Activated naive CD4-positive, alpha-beta T cell treated with anti-CD3 and anti-CD28 coated beads for 36 hours (primary cell): ENCODE measurements at regions of chr2 and their contacts with region 1.

Region 1: DNA sequence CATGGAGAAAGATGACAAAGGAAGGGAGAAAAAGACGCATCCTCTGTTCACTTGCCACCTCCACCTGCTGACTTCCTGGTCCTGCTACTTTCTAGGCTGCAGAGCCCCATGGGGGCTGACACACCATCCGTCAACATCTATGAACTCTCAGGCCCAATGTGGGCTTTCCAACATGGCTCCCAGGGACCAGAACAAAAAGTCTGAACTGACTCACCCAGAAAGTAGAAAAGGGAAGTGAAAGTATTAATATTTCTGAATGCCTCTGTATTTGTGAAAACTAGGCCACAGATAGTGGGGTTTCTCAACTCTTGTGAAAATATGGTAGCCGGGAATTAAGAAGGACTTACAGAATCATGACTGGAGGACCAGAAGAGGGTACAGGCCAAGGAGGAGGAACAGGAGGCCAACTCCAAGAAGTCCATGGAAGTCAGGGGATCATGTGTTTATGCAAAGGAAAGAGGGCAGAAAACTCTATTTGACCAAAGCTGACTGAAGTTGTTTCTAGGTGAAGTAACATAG is 123.1 kb upstream of the CAB39 start:
- DNase-seq: peak; percentile 61
- H3K4me3 Mint-ChIP-seq: no peak overlapping the region
- H3K27ac Mint-ChIP-seq: peak overlapping the region; percentile 65
- H3K4me1 Mint-ChIP-seq: peaks cover 50% of the 10 kb centered on the region
- H3K27me3 Mint-ChIP-seq: no peaks in the 10 kb centered on the region

Region 2: DNA sequence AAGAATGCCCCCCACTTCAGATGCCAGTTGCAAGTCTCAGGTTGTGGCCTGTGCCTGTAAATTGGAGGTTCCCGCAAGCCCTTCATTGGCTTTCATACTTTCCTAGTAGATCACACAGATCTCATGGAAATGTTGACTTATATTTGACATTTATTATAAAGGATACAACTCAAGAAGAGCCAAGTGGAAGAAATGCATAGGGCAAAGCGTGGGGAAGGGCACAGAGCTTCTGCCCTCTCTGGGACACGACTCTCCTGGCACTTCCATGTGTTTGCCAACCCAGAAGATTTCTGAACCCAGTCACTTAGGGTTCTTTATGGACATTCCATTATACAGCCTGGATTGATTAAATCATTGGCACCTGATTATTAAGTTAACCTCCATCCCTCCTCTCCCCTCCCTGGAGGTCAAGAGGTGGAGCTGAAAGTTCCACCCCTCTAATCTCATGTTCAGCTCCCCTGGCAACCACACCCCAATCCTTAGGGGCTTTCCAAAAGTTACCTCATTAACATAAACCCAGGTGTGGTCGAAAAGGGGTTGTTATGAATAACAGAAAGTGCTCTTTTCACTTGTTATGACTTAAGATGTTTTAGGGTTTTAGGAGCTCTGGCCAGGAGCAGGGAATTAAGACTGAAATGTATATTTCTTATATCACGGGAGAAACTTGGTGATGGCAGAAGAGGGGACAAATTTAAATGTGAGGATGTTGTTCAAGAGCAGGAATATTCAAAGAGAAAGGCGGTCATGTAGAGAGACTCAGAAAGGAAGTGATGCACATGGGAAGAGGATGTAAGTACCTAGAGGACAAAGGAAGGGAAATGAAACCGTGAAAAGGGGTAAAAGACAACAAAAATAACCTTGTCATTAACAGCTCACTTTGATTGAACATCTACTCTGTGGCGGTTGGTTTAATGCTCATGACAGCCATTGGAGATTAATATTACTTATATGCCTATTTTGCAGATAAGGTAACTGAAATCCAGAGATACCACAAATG is 141.8 kb before region 1 on chr2:
- CTCF ChIA-PET with region 1: no interaction called
- intact Hi-C with region 1: loop called (anchors 2 kb)
- DNase-seq: peak; percentile 60
- H3K4me3 Mint-ChIP-seq: peak overlapping the region; percentile 44
- H3K27ac Mint-ChIP-seq: peak overlapping the region; percentile 89
- H3K4me1 Mint-ChIP-seq: peaks cover 50% of the 10 kb centered on the region
- H3K27me3 Mint-ChIP-seq: no peaks in the 10 kb centered on the region

Region 3: GRCh38 chr2:230575642-230576324 is 13.8 kb before region 1 on chr2:
- CTCF ChIA-PET with region 1: no interaction called
- intact Hi-C with region 1: no loop called
- DNase-seq: peak; percentile 64
- H3K4me3 Mint-ChIP-seq: no peak overlapping the region
- H3K27ac Mint-ChIP-seq: peak overlapping the region; percentile 27
- H3K4me1 Mint-ChIP-seq: peaks cover 8% of the 10 kb centered on the region
- H3K27me3 Mint-ChIP-seq: no peaks in the 10 kb centered on the region

Region 4: GRCh38 chr2:230842473-230842872 is 252.9 kb after region 1 on chr2:
- CTCF ChIA-PET with region 1: no interaction called
- intact Hi-C with region 1: no loop called
- DNase-seq: no peak
- H3K4me3 Mint-ChIP-seq: no peak overlapping the region
- H3K27ac Mint-ChIP-seq: no peak overlapping the region
- H3K4me1 Mint-ChIP-seq: peaks cover 12% of the 10 kb centered on the region
- H3K27me3 Mint-ChIP-seq: peaks cover 4% of the 10 kb centered on the region